ENCODE measurements at regions of chr14 and their contacts with region 1.

Region 1: GRCh38 chr14:77457522-77458290 is at the starts of genes AHSA1 and VIPAS39:
- DNase-seq: peak; percentile 97
- H3K4me3 ChIP-seq: peak within 1 kb of the TSS; percentile 84 to 98 (median 91)
- H3K27ac ChIP-seq: peak within 1 kb of the TSS; percentile 60 to 100 (median 98)
- H3K4me1 ChIP-seq: peaks cover 19 to 22% of the 10 kb centered on the region in 2 donors
- H3K27me3 ChIP-seq: no peaks in the 10 kb centered on the region
- CTCF ChIP-seq: no peak
- POLR2A ChIP-seq: peak in 1 of 2 donors; percentile 80
- total RNA-seq, gene AHSA1: 49.4 to 111 (median 93.2) TPM
- total RNA-seq, gene VIPAS39: 17.1 to 24.9 (median 19.7) TPM

Region 2: DNA sequence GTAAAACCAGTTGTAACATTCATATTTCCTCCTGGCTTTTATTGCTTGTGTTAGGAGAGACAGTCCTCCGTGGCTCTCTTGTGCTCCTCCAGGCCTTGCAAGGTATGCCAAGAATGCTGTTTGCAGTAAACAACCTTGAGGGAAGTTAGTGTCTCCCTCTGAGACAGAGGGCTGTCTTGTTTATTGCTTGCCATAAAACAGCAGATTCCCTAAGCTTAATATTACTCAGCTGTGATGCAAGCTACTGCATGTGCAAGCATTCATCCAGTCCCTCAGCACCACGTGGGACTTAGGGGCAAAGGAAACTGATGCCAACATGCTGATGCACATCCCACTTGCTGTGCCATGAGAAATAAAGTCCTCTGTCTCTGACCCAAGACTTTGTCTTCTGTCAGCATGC is 143.7 kb before region 1 on chr14:
- intact Hi-C with region 1: loop called (anchors 5 kb)
- DNase-seq: peak in 1 of 2 donors; percentile 24
- H3K4me3 ChIP-seq: no peak overlapping the region
- H3K27ac ChIP-seq: peak overlapping the region in 2 of 3 donors; percentile 52 to 60
- H3K4me1 ChIP-seq: peaks cover 19 to 54% of the 10 kb centered on the region in 2 donors
- H3K27me3 ChIP-seq: no peaks in the 10 kb centered on the region
- CTCF ChIP-seq: no peak
- POLR2A ChIP-seq: no peak

Region 3: DNA sequence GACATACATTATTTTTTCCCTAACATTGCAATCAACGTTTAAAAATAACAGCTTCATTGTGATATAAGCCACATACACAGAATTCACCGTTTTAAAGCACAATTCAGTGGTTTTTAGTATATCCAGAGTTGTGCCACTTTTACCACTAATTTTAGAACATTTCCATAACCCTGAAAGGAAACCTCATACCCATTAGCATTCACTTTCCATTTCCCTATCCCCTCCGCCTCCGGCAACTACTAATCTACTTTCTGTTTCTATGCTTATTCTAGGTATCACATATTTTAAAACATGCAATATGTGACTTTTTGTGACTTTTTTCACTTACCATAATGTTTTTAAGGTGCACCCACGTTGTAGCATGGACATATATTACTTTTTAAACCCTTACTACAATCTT is 96.5 kb after region 1 on chr14:
- intact Hi-C with region 1: loop called (anchors 5 kb)
- DNase-seq: no peak
- H3K4me3 ChIP-seq: no peak overlapping the region
- H3K27ac ChIP-seq: no peak overlapping the region
- H3K4me1 ChIP-seq: no peaks in the 10 kb centered on the region
- H3K27me3 ChIP-seq: no peaks in the 10 kb centered on the region
- CTCF ChIP-seq: no peak
- POLR2A ChIP-seq: no peak

Region 4: DNA sequence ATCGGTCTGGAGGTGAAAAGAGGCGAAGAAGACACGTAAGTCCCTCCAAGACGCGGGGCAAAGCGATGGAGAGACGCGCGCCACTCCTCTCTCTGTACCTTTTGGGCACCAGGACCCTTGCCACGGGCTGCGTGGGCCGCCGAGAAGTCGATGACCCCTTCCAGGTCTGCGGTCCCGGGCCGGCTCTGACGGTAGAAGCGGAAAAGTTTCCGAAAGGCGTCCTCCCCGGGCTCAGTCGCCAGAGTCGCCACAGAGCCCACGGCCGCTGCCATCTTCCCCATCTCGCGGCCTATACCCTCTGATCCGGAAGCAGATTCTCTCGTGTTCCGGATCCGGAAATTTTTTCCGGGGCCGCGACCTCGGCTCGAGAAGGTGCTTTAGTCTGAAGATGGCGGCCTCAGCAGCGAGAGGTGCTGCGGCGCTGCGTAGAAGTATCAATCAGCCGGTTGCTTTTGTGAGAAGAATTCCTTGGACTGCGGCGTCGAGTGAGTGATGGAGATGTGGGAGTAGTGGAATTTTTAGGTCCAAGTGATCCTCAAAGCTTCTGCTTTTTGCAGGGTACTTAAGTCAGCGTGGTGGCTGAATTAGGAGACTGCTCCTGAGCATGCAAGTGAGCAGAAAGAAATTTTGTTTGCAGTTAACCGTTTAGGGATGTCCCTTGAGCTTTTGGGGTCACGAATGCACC is 250.2 kb after region 1 on chr14 and contains the starts of genes ALKBH1 and SLIRP:
- intact Hi-C with region 1: loop called (anchors 5 kb)
- DNase-seq: peak; percentile 85 to 89
- H3K4me3 ChIP-seq: peak within 1 kb of the TSS; percentile 68 to 97 (median 79)
- H3K27ac ChIP-seq: peak within 1 kb of the TSS in 2 of 3 donors; percentile 31 to 53
- H3K4me1 ChIP-seq: peaks cover 20 to 27% of the 10 kb centered on the region in 2 donors
- H3K27me3 ChIP-seq: no peaks in the 10 kb centered on the region
- CTCF ChIP-seq: no peak
- POLR2A ChIP-seq: peak in 1 of 2 donors; percentile 69
- total RNA-seq, gene ALKBH1: 6.3 to 13.8 (median 10.3) TPM
- total RNA-seq, gene SLIRP: 208 to 325 (median 226) TPM